ENCODE measurements at regions of chr11 and their contacts with region 1.

Region 1: DNA sequence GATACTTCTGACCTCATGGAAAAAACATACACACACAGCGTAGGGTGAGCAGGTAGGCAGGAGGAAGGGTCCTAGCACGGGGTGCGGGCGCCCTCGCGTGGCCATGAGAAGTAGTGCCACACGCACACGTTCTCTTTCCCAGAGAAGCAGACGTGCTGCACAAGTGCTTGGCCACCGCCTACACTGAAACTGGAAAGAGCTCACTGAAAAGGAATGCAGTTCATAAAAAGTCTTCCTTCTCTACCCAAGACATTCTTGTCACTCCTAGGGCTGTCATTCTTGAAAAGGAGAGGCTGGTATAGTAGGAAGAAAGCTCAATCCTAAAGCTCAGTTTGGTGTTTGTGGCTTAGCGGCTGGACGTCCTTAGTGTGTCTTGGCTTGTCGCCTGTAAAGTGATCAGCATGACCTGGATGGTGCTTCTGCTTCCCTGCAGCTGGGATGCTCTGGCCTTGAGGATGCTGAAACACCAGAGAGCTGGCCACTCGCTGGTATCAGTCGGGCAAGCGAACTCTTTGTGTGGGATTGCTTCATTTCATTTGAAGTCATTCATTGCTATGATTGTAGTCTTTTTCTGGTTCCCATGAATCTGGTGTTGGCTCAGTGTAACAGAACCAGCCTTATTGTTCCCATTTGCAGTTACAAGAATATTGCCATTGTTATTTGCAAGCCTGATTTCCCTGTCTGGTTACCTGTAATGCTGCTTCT is 303.8 kb downstream of the NTM start:
- DNase-seq: peak; percentile 54 to 82 (median 70)
- ATAC-seq: peak; percentile 70 to 87 (median 80)
- H3K4me3 ChIP-seq: no peak overlapping the region
- H3K27ac ChIP-seq: peak overlapping the region in 2 of 12 donors; percentile 26 to 48
- H3K4me1 ChIP-seq: peaks cover 0 to 10% (median 0%) of the 10 kb centered on the region in 12 donors
- H3K27me3 ChIP-seq: peaks cover 0 to 11% (median 0%) of the 10 kb centered on the region in 9 donors
- CTCF ChIP-seq: peak; percentile 86 to 95 (median 90)
- POLR2A ChIP-seq: no peak

Region 2: GRCh38 chr11:131064373-131064991 is 609.7 kb before region 1 on chr11:
- intact Hi-C with region 1: loop called in 9 of 10 experiments (anchors 2 to 5 kb)
- DNase-seq: peak in 4 of 5 donors; percentile 20 to 49 (median 41)
- ATAC-seq: peak in 3 of 4 donors; percentile 53 to 83 (median 71)
- H3K4me3 ChIP-seq: no peak overlapping the region
- H3K27ac ChIP-seq: no peak overlapping the region
- H3K4me1 ChIP-seq: no peaks in the 10 kb centered on the region
- H3K27me3 ChIP-seq: peaks cover 0 to 34% (median 5%) of the 10 kb centered on the region in 9 donors
- CTCF ChIP-seq: peak; percentile 52 to 85 (median 74)
- POLR2A ChIP-seq: no peak

Region 3: DNA sequence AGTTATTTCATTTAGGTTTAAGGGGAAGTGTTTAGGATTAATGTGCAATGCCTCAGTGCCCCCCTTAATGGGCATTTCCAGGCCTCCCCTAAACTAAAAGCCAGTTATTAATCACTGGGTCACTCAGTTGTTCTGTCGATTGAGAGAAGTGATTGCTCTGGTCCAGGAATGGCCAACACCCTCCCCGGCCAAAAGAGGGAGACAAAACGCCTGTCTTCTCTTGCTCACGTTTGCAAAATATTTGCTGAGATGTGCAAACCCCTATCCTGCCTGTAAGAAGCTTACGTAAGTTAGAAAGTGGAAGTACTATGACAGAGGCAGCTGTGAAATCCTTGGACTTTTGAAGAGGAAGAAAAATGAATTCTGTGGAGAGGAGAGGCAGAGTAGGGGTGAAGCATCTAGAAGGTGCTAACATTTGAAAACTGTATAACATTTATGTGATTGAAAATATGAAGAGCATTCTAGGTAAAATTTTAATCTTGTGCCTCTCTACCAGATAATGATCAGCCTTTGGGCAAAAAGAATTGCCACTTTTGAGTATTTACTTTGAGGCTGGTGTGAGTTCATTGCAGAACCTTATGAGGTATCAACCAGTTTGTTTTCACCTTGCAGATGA is 266.1 kb before region 1 on chr11:
- intact Hi-C with region 1: loop called in 1 of 10 experiments (anchors 5 kb)
- DNase-seq: peak in 1 of 5 donors; percentile 35
- ATAC-seq: peak in 2 of 4 donors; percentile 36 to 64
- H3K4me3 ChIP-seq: no peak overlapping the region
- H3K27ac ChIP-seq: no peak overlapping the region
- H3K4me1 ChIP-seq: no peaks in the 10 kb centered on the region
- H3K27me3 ChIP-seq: peaks cover 0 to 13% (median 0%) of the 10 kb centered on the region in 9 donors
- CTCF ChIP-seq: peak in 10 of 12 donors; percentile 24 to 46 (median 35)
- POLR2A ChIP-seq: no peak

Region 4: DNA sequence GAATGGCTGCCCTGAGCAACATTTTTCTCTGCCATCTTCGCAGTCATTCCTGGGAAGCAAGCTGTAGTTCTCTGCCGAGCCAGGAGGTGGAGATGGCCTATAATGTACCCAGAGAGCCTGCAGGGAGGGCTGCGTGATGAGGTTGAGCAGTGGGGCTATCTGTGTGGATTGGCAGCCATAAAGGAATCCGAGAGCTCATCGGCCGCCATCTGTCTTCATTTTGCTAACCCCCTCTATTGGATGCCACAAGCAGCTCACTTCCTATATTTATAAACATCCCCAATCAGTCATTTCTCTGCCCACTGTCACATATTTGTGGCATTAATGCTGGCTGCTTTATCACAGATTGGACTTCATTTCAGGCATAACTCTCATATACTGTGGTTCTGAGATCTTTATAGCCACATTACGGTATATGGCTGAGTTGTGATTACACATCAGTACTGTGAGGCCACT is 94.2 kb before region 1 on chr11:
- intact Hi-C with region 1: loop called in 7 of 10 experiments (anchors 1 to 10 kb)
- DNase-seq: no peak
- ATAC-seq: peak in 2 of 4 donors; percentile 36 to 55
- H3K4me3 ChIP-seq: no peak overlapping the region
- H3K27ac ChIP-seq: no peak overlapping the region
- H3K4me1 ChIP-seq: no peaks in the 10 kb centered on the region
- H3K27me3 ChIP-seq: peaks cover 0 to 12% (median 0%) of the 10 kb centered on the region in 9 donors
- CTCF ChIP-seq: peak in 7 of 12 donors; percentile 11 to 41 (median 24)
- POLR2A ChIP-seq: no peak

Region 5: GRCh38 chr11:131637469-131638175 is 36.6 kb before region 1 on chr11:
- intact Hi-C with region 1: no loop called
- DNase-seq: no peak
- ATAC-seq: no peak
- H3K4me3 ChIP-seq: no peak overlapping the region
- H3K27ac ChIP-seq: no peak overlapping the region
- H3K4me1 ChIP-seq: no peaks in the 10 kb centered on the region
- H3K27me3 ChIP-seq: no peaks in the 10 kb centered on the region
- CTCF ChIP-seq: no peak
- POLR2A ChIP-seq: no peak

Region 6: DNA sequence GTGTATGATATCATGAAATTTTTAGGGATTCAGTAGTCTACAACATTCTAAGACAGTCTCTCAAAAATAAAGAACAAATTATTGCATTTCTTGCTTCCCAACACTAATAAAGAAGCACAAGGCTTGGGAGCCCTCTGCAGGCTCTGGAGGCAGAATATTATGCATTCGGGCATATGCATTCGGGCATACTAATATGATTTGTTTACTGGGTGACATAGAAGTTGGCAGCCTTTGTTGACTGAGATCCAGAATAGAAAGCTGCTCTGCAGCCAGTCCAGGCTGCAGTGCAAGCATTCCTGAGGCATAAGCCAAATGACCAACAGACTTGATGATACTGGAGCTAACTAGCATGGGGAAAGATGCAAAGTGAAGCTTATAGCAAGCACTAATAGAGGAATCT is 912.6 kb after region 1 on chr11:
- intact Hi-C with region 1: no loop called
- DNase-seq: no peak
- ATAC-seq: peak in 3 of 4 donors; percentile 27 to 60 (median 39)
- H3K4me3 ChIP-seq: no peak overlapping the region
- H3K27ac ChIP-seq: no peak overlapping the region
- H3K4me1 ChIP-seq: peaks cover 0 to 7% (median 0%) of the 10 kb centered on the region in 12 donors
- H3K27me3 ChIP-seq: no peaks in the 10 kb centered on the region
- CTCF ChIP-seq: no peak
- POLR2A ChIP-seq: no peak

Measured in heart left ventricle (tissue), 16 donors.